ENCODE measurements at regions of chr1 and their contacts with region 1.

Region 1: GRCh38 chr1:94025383-94026340 is 95.3 kb downstream of the ABCA4 start:
- H3K4me3 ChIP-seq: no peak overlapping the region
- H3K27ac ChIP-seq: no peak overlapping the region
- H3K4me1 ChIP-seq: no peaks in the 10 kb centered on the region
- CTCF ChIP-seq: peak; percentile 78

Region 2: DNA sequence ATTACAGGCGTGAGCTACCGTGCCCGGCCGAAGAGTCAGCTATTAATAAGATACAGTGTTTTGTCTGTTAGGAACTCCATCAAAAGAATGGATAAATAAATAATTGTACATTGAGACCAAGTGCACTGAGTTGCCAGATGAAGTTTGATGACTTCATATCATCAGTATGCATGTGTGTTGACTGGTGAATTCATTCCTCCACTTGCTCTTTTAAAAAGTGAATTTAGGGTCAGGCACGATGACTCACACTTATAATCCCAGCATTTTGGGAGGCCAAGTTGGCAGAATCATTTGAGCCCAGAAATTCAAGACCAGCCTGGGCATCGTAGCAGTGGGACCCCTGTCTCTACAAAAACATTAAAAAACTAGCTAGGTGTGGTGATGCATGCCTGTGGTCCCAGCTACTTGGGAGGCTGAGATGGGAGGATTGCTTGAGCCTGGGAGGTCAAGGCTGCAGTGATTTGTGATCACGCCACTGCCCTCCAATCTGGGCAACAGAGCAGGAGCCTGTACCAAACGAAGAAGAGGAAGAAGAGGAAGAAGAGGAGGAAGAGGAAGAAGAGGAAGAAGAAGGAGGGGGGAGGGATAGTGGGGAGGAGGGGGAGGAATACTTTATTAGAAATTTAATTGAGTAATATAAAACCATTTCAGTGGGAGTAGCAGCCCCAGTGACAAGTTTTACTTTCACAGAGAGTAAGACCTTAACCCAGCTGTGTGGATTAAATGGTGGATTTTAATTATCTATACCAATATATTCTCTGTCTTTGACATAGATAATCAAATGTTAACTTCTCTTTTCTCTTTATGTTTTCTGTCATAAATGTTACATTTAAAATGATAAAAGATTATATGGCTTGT is 770.2 kb before region 1 on chr1:
- CTCF ChIA-PET with region 1: no interaction called
- POLR2A ChIA-PET with region 1: no interaction called
- H3K4me3 ChIP-seq: no peak overlapping the region
- H3K27ac ChIP-seq: no peak overlapping the region
- H3K4me1 ChIP-seq: no peaks in the 10 kb centered on the region
- CTCF ChIP-seq: no peak

Region 3: DNA sequence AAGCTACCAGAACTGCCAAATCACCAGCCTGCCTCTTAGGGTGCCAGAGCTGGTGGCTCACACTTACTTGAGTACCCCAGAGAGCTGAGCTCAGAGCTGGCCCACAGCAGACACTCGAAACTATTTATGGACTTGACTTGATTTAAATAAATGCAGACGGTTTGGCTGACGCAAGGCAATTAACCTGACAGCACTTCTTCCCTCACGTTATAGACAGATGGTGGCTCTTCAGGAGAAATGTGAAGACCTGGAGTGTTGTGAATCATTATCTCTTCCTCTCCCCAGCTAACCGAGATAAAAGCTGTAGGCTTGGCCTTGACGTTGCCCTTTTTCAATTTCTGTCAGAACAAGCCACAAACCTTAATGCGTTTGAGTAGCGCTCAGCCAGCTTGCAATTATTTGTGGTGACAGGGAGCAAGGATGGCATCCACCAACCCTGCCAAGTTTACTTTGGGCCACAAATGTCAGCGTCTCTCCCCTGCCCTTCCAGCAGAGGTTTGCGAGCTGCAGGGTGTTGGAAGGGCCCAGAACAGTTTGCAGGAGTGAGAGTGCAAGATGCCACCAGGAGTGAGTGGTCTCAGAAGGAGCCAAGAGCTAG is 310.0 kb before region 1 on chr1:
- CTCF ChIA-PET with region 1: no interaction called
- POLR2A ChIA-PET with region 1: no interaction called
- H3K4me3 ChIP-seq: no peak overlapping the region
- H3K27ac ChIP-seq: no peak overlapping the region; the same call in 1 of the 2 replicates
- H3K4me1 ChIP-seq: peaks cover 9% of the 10 kb centered on the region
- CTCF ChIP-seq: no peak

Region 4: GRCh38 chr1:93846211-93846991 is 179.3 kb before region 1 on chr1:
- CTCF ChIA-PET with region 1: no interaction called
- POLR2A ChIA-PET with region 1: no interaction called
- H3K4me3 ChIP-seq: peak overlapping the region; percentile 88
- H3K27ac ChIP-seq: peak overlapping the region; percentile 91
- H3K4me1 ChIP-seq: peaks cover 3% of the 10 kb centered on the region; the same call in 1 of the 2 replicates
- CTCF ChIP-seq: peak; percentile 67

Region 5: DNA sequence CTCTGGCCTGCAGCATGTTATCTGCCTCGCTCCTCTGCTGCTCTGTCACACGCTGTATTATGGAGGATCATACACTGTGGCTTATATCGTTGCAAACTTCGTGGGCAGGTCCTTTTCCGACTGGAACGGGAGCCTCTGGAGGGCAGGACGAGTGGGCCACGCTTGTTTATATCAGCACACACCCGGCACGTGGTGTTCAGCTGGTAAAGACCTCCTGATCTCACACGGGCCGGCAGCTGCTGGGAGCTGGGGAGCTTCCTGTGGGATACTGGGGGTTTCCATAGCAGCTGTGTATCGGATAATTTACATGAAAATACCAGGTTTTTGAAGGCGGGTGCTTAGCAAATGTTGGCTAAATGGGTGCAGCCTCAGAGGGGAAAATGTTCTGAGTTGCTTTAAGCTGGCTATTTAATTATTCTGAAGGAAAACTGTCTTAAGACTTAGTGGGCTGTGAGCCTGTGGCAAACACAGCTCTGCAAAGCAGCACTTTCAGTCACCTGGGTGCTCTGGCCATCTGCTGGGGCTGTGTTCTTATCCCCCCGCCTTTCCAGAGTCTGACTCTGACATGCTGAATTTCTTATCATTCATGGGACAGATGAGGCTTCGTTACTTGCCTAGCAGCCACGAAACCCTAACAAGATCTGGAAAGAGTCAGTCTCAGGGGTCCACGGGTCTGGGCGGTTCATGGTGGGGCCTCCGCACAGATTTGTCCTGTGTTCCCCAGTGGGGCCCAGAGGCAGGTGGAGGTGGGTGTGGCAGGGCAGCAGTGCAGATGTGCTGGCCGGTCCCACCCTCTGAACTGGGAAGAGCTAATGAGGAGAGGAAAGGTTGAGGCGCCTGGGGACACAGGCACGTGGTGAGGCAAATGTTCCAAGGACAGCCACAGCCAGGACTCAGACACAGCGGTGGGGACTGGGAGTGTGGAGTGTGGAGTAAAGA is 12.7 kb before region 1 on chr1:
- CTCF ChIA-PET with region 1: interaction called, 24 read pairs
- POLR2A ChIA-PET with region 1: no interaction called
- H3K4me3 ChIP-seq: no peak overlapping the region
- H3K27ac ChIP-seq: no peak overlapping the region
- H3K4me1 ChIP-seq: no peaks in the 10 kb centered on the region
- CTCF ChIP-seq: no peak

Region 6: DNA sequence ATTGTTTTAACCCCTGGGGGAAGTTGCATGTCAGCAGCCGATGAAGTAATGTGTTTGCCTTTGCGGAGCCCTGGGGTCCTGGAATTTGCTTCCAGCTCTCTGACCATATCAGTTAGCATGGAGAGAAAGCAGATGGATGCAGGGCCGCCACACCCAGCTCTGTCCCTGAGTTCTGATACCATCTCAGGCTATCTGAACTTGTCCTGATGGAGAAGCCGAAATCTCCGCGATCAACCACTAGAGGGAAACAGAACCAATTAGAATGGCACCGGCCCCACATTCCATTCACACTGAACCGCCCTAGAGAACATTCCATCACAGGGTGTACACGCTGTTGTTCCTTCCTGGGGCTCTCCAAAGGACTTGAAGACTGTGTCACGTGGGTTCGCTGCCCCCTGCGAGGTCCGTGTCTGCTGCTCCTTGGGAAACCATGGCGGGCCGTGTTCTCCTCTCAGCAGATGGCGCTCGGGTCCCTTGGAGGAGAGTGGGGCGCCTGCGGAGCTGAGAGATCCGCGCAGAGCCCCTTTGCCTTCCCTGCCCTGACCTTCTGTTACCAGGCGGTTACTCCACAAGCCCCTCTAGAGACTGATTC is 19.9 kb after region 1 on chr1:
- CTCF ChIA-PET with region 1: interaction called, 285 read pairs
- POLR2A ChIA-PET with region 1: no interaction called
- H3K4me3 ChIP-seq: no peak overlapping the region
- H3K27ac ChIP-seq: no peak overlapping the region
- H3K4me1 ChIP-seq: no peaks in the 10 kb centered on the region
- CTCF ChIP-seq: peak; percentile 75

Region 7: GRCh38 chr1:94061513-94062443 is 36.1 kb after region 1 on chr1:
- CTCF ChIA-PET with region 1: interaction called, 56 read pairs
- POLR2A ChIA-PET with region 1: no interaction called
- H3K4me3 ChIP-seq: no peak overlapping the region
- H3K27ac ChIP-seq: no peak overlapping the region
- H3K4me1 ChIP-seq: no peaks in the 10 kb centered on the region
- CTCF ChIP-seq: peak; percentile 88

Region 8: DNA sequence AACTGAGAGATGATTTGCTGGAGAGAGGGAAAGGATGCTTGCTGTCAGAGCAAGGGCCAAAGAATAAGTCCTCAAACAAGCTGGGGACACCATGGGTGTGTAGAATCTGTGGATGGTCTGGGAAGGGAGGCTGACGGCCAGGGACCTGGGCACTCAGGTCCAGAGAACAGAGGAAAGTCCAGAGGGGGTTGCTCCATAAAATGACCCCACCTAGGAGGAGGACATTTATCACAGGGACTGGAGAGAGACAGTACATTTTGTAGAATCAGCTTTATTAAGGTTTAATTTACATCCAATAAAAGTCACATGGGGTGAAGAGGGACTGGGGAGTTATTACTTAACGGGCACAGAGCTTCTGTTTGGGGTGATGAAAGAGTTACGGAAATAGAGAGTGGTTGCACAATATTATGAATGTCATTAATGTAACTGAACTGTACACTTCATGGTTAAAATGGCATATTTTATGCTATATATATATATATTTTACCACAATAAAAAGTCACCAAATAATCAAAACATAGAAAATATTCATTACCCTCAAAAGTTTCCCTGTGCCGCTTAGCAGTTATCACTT is 319.6 kb after region 1 on chr1:
- CTCF ChIA-PET with region 1: interaction called, 13 read pairs
- POLR2A ChIA-PET with region 1: no interaction called
- H3K4me3 ChIP-seq: no peak overlapping the region
- H3K27ac ChIP-seq: no peak overlapping the region
- H3K4me1 ChIP-seq: 0 out of 2 replicates have a peak, but pooled peaks cover 3% of the 10 kb centered on the region
- CTCF ChIP-seq: no peak

Region 9: DNA sequence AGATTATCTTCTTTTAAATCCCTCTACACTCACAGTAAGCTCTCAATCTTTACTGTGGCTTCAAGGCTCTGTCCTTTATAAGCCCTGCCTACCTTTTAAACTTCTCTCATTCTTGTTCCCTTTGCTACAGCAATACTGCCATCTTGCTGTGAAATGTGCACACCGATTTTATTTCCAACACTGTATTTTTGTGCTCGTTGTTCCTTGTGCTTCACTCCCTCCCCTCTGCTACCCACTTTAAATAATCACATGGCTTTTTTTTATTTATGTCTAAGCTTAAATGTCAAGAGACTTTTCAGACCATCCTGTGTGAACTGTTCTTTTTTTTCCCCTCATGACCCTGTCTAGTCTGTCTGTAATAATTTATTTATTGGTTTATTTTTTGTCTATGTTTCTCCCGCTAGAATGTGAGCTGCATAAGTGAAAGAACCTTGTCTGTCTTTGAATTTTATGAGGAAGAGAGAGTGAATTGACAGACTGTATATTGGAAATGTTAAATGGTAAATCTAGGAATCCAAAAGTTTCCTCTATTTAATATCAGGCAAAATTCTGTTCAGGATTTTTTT is 438.2 kb after region 1 on chr1:
- CTCF ChIA-PET with region 1: interaction called, 10 read pairs
- POLR2A ChIA-PET with region 1: no interaction called
- H3K4me3 ChIP-seq: no peak overlapping the region
- H3K27ac ChIP-seq: no peak overlapping the region
- H3K4me1 ChIP-seq: no peaks in the 10 kb centered on the region
- CTCF ChIP-seq: no peak